Right lobe of liver (tissue), 6 donors: ENCODE measurements at regions of chr22 and their contacts with region 1.

Region 1: GRCh38 chr22:27597703-27598444 is 203.7 kb downstream of the MN1 start:
- DNase-seq: no peak
- ATAC-seq: peak in 3 of 4 donors; percentile 40 to 54 (median 53)
- H3K4me3 ChIP-seq: no peak overlapping the region
- H3K27ac ChIP-seq: no peak overlapping the region
- H3K4me1 ChIP-seq: no peaks in the 10 kb centered on the region
- H3K27me3 ChIP-seq: no peaks in the 10 kb centered on the region
- CTCF ChIP-seq: peak in 2 of 4 donors; percentile 7 to 8
- POLR2A ChIP-seq: no peak

Region 2: GRCh38 chr22:27296091-27296675 is 301.7 kb before region 1 on chr22:
- intact Hi-C with region 1: no loop called
- DNase-seq: no peak
- ATAC-seq: no peak
- H3K4me3 ChIP-seq: no peak overlapping the region
- H3K27ac ChIP-seq: no peak overlapping the region
- H3K4me1 ChIP-seq: no peaks in the 10 kb centered on the region
- H3K27me3 ChIP-seq: peaks cover 0 to 3% of the 10 kb centered on the region in 2 donors
- CTCF ChIP-seq: no peak
- POLR2A ChIP-seq: no peak

Region 3: GRCh38 chr22:27405672-27406388 is 192.0 kb before region 1 on chr22:
- intact Hi-C with region 1: loop called in 1 of 2 experiments (anchors 10 kb)
- DNase-seq: peak; percentile 66 to 73 (median 69)
- ATAC-seq: peak; percentile 89 to 96 (median 92)
- H3K4me3 ChIP-seq: no peak overlapping the region
- H3K27ac ChIP-seq: no peak overlapping the region
- H3K4me1 ChIP-seq: no peaks in the 10 kb centered on the region
- H3K27me3 ChIP-seq: no peaks in the 10 kb centered on the region
- CTCF ChIP-seq: peak; percentile 78 to 89 (median 83)
- POLR2A ChIP-seq: no peak

Region 4: GRCh38 chr22:27825174-27825573 is 227.3 kb after region 1 on chr22:
- intact Hi-C with region 1: no loop called
- DNase-seq: no peak
- ATAC-seq: peak in 1 of 4 donors; percentile 18
- H3K4me3 ChIP-seq: no peak overlapping the region
- H3K27ac ChIP-seq: no peak overlapping the region
- H3K4me1 ChIP-seq: no peaks in the 10 kb centered on the region
- H3K27me3 ChIP-seq: no peaks in the 10 kb centered on the region
- CTCF ChIP-seq: peak in 3 of 4 donors; percentile 7 to 41 (median 15)
- POLR2A ChIP-seq: no peak